CD14-positive monocyte (primary cell): ENCODE measurements at regions of chr12 and their contacts with region 1.

Region 1: GRCh38 chr12:10140001-10140400 is 10.0 kb upstream of the CLEC7A start:
- DNase-seq: peak; percentile 72 to 81 (median 75)
- H3K4me3 ChIP-seq: no peak overlapping the region
- H3K4me3 Mint-ChIP-seq: no peak overlapping the region
- H3K27ac ChIP-seq: no peak overlapping the region
- H3K27ac Mint-ChIP-seq: peak overlapping the region; percentile 5 to 73 (median 49)
- H3K4me1 ChIP-seq: peaks cover 6 to 7% of the 10 kb centered on the region in 2 donors
- H3K4me1 Mint-ChIP-seq: peaks cover 14% of the 10 kb centered on the region
- H3K27me3 ChIP-seq: no peaks in the 10 kb centered on the region
- H3K27me3 Mint-ChIP-seq: peaks cover 2 to 5% (median 3%) of the 10 kb centered on the region in 3 donors
- CTCF ChIP-seq: peak; percentile 82

Region 2: GRCh38 chr12:10033783-10034545 is 106.0 kb before region 1 on chr12:
- intact Hi-C with region 1: loop called (anchors 2 to 5 kb)
- DNase-seq: peak in 1 of 3 donors; percentile 46
- H3K4me3 ChIP-seq: no peak overlapping the region
- H3K4me3 Mint-ChIP-seq: no peak overlapping the region
- H3K27ac ChIP-seq: peak overlapping the region in 1 of 2 donors; percentile 24
- H3K27ac Mint-ChIP-seq: peak overlapping the region in 6 of 7 donors; percentile 15 to 81 (median 51)
- H3K4me1 ChIP-seq: peaks cover 26 to 29% of the 10 kb centered on the region in 2 donors
- H3K4me1 Mint-ChIP-seq: peaks cover 38% of the 10 kb centered on the region
- H3K27me3 ChIP-seq: no peaks in the 10 kb centered on the region
- H3K27me3 Mint-ChIP-seq: peaks cover 0 to 2% (median 2%) of the 10 kb centered on the region in 3 donors
- CTCF ChIP-seq: peak; percentile 78